Sciatic nerve (tissue), 2 donors: ENCODE measurements at regions of chr15 and their contacts with region 1.

Region 1: GRCh38 chr15:96336642-96337364 is 6.3 kb downstream of the NR2F2 start:
- DNase-seq: no peak
- ATAC-seq: peak; percentile 4

Region 2: DNA sequence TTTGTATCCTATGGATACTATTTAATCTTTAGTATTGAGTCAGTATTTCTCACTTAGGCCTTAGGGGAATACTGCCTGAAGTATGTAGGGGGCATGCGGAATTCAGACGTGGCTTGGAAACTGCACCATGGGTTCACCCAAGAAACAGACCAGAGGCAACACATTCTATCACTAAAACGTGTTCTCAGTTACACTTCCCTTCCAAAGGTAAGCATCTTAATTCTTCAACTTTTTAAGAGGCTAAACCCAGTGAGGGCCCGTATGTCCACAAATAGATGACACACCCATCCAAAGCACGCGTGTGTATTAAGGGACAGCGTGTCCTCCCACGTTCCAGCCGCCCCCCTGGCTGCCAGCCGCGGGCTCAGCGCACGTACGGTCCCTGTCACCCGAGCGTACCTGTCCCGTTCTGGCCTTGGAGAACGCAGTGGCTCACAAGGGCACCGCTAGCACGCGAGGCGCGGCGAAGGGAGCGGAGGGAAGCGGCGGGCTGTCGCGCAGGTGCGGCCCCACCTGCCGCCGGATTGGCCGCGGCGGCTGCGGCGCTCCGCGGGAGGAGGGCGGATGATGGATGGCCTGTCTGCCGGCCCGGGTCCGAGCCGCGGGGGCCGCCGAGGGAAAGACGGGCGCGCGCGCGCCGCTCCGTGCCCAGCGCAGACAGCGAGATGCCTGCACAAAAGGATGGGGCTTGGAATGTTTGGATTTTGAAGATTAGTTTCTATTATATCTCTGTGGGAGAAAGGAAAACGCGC is 1010.2 kb before region 1 on chr15:
- intact Hi-C with region 1: loop called (anchors 5 kb)
- DNase-seq: peak; percentile 65
- ATAC-seq: peak; percentile 72

Region 3: DNA sequence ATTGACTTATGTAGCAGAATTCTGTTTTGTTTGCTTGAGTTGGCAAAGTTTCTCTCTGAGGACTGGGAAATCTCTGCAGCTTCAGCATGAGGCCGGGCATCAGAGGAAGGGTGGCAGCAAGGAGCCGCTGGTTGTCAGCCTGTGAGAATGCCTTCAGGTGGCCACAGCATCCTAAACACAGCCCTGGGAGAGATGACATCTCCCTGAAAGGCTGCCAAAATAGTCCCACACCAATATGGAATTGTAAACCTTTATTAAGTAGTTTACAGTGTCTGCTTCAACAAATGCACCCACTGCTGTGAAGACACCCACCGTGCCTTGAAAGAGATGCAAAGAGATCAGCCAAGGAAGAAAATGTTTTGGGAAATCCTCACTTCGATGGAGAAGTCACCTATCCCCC is 1014.0 kb after region 1 on chr15:
- intact Hi-C with region 1: no loop called
- DNase-seq: no peak
- ATAC-seq: no peak